Activated CD8-positive, alpha-beta T cell treated with anti-CD3 and anti-CD28 coated beads, Interleukin-2, amount 10 ng/mL, durations not matched to agents 7 days and 5 days (primary cell): ENCODE measurements at regions of chr6 and their contacts with region 1.

Region 1: DNA sequence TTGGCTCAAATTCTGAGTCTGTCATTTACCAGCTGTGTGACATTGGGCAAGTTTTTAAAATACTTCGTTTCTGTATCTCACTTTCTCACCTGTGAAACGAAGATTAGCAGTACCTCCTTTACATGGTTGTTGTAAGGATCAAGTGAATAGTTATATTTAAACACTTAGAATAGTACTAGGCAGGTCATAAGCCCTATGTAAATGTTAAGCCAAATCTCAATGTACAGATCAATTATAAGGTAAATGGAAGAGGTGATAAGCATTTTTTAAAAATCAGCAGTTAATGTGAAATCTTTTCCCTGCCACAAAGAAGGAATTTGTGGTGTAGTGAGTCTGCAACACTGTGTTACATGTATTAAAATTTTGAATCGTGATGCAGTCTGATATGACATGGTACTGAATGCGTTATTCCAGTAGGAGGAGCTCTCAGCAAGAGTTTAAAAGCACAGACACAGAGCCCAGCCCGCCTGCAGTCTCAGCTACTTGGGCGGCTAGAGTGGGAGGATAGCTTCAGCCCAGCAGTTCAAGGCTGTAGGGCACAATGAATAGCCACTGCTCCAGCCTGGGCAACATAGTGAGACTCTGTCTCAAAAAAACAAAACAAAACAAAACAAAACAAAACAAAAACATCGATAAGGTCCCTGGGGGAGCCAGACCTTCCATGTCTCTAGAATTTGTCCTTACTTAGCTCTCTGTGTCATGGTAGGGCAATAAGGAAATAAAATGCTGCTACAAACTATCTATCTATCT is 46.0 kb downstream of the GTF2H5 start:
- DNase-seq: peak; percentile 75
- ATAC-seq: peak; percentile 99
- H3K4me3 Mint-ChIP-seq: no peak overlapping the region
- H3K27ac Mint-ChIP-seq: no peak overlapping the region
- H3K4me1 Mint-ChIP-seq: peaks cover 12% of the 10 kb centered on the region
- H3K27me3 Mint-ChIP-seq: no peaks in the 10 kb centered on the region

Region 2: GRCh38 chr6:158194487-158195280 is 19.4 kb before region 1 on chr6:
- CTCF ChIA-PET with region 1: interaction called, 11 read pairs
- POLR2A ChIA-PET with region 1: no interaction called
- DNase-seq: no peak
- ATAC-seq: no peak
- H3K4me3 Mint-ChIP-seq: no peak overlapping the region
- H3K27ac Mint-ChIP-seq: no peak overlapping the region
- H3K4me1 Mint-ChIP-seq: no peaks in the 10 kb centered on the region
- H3K27me3 Mint-ChIP-seq: no peaks in the 10 kb centered on the region

Region 3: DNA sequence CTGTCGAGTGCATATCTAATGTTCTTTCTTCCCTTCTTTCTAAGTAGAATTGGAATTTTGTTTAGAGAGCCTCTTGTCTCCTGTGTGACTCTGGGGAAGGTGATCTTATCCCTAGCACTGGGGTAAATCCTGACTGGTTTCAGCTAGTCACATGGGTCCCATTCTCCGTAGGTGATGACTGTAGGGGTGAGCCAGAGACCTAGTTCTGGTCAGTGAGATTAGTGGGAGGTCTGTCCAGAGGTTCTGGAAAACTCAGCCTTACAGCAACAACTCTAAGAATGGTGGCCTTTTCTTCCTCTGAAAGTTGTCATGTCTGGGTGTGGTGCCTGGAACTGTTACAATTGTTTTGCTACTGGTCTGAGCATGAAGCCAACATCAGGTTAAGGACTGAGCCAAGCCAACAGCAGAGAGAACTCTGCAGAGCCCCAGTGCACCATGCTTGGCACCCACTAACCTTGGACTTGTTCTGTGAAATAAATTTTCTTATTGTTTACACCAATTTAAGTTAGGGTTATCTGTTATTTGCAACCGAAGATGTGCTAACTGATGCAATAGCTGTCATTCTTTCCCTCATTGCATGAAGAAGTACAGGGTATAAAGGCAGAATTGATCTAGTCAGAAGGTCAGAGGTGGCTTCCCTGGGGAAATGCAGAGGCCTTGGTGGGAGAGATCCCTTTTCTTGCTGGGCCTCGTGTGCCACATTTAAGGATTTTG is 41.3 kb after region 1 on chr6:
- CTCF ChIA-PET with region 1: no interaction called
- POLR2A ChIA-PET with region 1: no interaction called
- DNase-seq: no peak
- ATAC-seq: no peak
- H3K4me3 Mint-ChIP-seq: no peak overlapping the region
- H3K27ac Mint-ChIP-seq: no peak overlapping the region
- H3K4me1 Mint-ChIP-seq: peaks cover 22% of the 10 kb centered on the region
- H3K27me3 Mint-ChIP-seq: no peaks in the 10 kb centered on the region

Region 4: GRCh38 chr6:158518191-158519127 is 304.4 kb after region 1 on chr6:
- CTCF ChIA-PET with region 1: interaction called, 46 read pairs
- POLR2A ChIA-PET with region 1: no interaction called
- DNase-seq: peak; percentile 76
- ATAC-seq: peak; percentile 89
- H3K4me3 Mint-ChIP-seq: peak overlapping the region; percentile 80
- H3K27ac Mint-ChIP-seq: peak overlapping the region; percentile 80
- H3K4me1 Mint-ChIP-seq: peaks cover 48% of the 10 kb centered on the region
- H3K27me3 Mint-ChIP-seq: peaks cover 20% of the 10 kb centered on the region

Region 5: GRCh38 chr6:158595223-158595622 is 381.1 kb after region 1 on chr6:
- CTCF ChIA-PET with region 1: interaction called, 15 read pairs
- POLR2A ChIA-PET with region 1: no interaction called
- DNase-seq: no peak
- ATAC-seq: no peak
- H3K4me3 Mint-ChIP-seq: no peak overlapping the region
- H3K27ac Mint-ChIP-seq: no peak overlapping the region
- H3K4me1 Mint-ChIP-seq: peaks cover 1% of the 10 kb centered on the region
- H3K27me3 Mint-ChIP-seq: no peaks in the 10 kb centered on the region

Region 6: DNA sequence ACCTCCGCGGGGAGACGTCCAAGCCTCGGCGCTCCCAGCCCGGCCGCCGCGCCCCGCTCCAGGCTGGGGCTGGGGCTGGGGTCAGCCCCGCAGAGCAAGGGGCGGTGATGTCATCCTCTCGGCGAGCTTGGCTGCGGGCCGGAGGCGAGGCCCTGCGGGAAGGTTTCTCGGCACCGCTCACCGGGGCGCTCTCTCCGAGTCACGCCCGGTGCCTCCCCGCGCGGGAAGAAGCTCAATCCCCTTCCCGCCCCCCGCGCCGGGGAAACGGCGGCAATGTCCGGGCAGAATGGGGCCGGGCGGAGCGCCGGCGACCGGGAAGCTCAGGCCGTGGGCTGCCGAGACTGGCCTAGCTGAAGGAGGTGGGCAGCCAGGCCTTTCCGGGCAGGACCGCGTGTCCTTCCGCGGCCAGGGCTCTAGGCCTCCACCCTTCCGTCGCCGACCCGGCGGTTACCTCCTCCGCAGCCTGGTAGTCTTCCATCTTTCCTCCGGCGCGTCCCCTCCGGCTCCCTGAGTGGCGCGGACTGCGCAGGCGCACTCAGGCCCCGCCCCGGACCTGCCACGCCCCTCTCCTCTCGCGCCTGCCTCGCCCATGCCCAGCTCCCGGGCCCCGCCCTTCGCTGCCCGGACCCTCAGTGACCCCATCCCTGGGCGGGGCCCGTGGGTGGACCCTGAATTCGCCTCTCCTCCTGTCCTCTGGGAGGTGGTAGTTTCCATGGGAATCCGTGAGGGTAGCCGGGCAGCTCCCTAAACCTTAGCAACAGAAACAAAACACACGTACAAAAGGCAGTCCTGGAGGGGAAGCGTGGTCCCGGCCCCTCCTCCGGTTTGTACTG is 430.3 kb after region 1 on chr6 and contains the start of gene DYNLT1:
- CTCF ChIA-PET with region 1: interaction called, 10 read pairs
- POLR2A ChIA-PET with region 1: interaction called, 3 read pairs
- DNase-seq: peak; percentile 91
- ATAC-seq: peak; percentile 74
- H3K4me3 Mint-ChIP-seq: peak within 1 kb of the TSS; percentile 99
- H3K27ac Mint-ChIP-seq: peak within 1 kb of the TSS; percentile 97
- H3K4me1 Mint-ChIP-seq: peaks cover 71% of the 10 kb centered on the region
- H3K27me3 Mint-ChIP-seq: no peaks in the 10 kb centered on the region
- total RNA-seq, gene DYNLT1: 79.0 to 86.4 TPM

Region 7: DNA sequence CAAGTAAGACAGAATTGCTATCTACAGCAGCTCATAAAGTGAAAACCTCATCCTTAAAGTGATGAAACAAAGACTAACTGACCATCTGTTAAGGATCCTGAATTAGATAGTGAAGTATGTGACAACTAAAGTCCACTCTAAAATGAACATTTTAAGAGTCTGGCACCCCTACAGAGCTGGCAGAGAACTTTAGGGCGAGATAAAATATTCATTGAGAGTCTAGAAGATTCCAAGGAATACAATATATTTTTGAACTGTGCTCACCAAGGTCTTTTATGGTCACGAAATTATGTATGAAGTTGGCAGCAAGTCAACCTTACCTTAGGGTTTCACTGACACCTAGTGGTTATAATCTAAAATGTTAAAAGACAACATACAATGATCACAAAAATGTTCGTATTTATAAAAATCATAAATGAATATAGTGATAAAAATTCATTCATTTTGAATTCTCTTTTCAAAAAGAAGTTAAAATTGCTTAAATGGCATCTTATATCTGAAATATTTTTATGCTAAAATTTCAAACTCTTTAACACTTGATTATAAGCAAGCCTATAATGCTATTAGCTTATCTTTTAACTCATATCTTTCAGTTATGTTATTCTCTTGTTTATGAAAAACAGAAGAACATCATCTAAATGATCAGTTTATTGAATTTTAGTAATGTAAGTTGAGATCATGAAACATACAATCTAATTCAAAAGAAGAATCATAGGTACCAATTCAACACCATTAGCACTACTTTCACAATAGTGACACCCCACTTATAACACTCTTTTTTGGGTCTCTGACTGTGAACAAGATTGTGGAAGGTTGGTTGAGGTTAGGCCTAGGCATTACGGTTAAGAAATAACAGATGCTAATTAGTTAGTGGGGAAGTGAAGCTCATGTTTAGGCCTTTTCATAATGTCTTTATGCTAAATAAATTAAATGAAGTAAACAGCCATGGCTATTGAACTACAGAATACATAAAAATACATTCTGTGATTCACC is 758.4 kb after region 1 on chr6:
- CTCF ChIA-PET with region 1: interaction called, 10 read pairs
- POLR2A ChIA-PET with region 1: no interaction called
- DNase-seq: no peak
- ATAC-seq: peak; percentile 64
- H3K4me3 Mint-ChIP-seq: no peak overlapping the region
- H3K27ac Mint-ChIP-seq: no peak overlapping the region
- H3K4me1 Mint-ChIP-seq: no peaks in the 10 kb centered on the region
- H3K27me3 Mint-ChIP-seq: peaks cover 2% of the 10 kb centered on the region